PC-3 (cell line): ENCODE measurements at regions of chr7 and their contacts with region 1.

Region 1: GRCh38 chr7:139829025-139829774 is at the start of gene TBXAS1:
- DNase-seq: peak; percentile 65
- ATAC-seq: peak; percentile 89
- H3K4me3 ChIP-seq: no peak within 1 kb of the TSS
- H3K27ac ChIP-seq: peak within 1 kb of the TSS; percentile 65
- H3K4me1 ChIP-seq: peaks cover 22% of the 10 kb centered on the region
- H3K27me3 ChIP-seq: no peaks in the 10 kb centered on the region
- CTCF ChIP-seq: no peak
- total RNA-seq, gene TBXAS1: 21.8 and 27.5 TPM in 2 replicates

Region 2: DNA sequence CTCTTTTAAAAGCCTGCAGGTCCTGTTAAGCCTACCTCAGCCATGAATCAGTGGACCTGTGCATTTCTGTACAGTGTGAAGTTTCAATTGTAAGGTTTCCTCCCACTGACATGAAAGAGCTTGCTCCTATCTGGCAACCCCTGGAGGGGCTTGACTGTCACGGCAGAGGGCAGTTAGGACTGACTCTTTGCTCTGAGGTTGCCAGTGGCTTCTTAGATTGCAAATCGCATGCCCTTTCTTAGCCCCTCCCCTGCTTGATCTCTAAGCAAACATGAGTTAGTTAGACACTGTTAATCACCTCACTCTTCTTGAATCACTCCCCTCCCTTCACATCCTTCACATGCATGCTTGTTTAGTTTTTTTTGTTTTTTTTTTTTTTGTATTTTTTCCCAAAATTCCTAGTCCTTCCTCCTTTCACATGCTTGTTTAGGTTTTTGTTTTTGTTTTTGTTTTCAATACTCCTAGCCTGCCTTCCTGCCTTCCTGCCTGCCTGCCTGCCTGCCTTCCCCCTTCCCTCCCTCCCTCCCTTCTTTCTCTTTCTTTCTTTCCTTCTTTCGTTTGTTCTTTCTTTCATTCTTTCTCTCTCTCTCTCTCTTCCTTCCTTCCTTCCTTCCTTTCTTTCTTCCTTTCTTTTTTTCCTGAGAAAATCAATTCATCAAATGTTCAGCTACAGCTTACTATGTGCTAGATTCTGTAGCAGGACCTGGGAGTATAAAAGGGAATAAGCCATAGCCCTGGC is 45.4 kb before region 1 on chr7:
- CTCF ChIA-PET with region 1: no interaction called
- POLR2A ChIA-PET with region 1: interaction called, 3 read pairs
- intact Hi-C with region 1: loop called (anchors 5 kb)
- DNase-seq: peak; percentile 65
- ATAC-seq: peak; percentile 82
- H3K4me3 ChIP-seq: no peak overlapping the region
- H3K27ac ChIP-seq: peak overlapping the region; percentile 49
- H3K4me1 ChIP-seq: peaks cover 45% of the 10 kb centered on the region
- H3K27me3 ChIP-seq: no peaks in the 10 kb centered on the region
- CTCF ChIP-seq: no peak

Region 3: GRCh38 chr7:139842401-139843210 is 13.4 kb after region 1 on chr7:
- CTCF ChIA-PET with region 1: no interaction called
- POLR2A ChIA-PET with region 1: no interaction called
- intact Hi-C with region 1: no loop called
- DNase-seq: no peak
- ATAC-seq: no peak
- H3K4me3 ChIP-seq: no peak overlapping the region
- H3K27ac ChIP-seq: no peak overlapping the region
- H3K4me1 ChIP-seq: no peaks in the 10 kb centered on the region
- H3K27me3 ChIP-seq: no peaks in the 10 kb centered on the region
- CTCF ChIP-seq: no peak

Region 4: DNA sequence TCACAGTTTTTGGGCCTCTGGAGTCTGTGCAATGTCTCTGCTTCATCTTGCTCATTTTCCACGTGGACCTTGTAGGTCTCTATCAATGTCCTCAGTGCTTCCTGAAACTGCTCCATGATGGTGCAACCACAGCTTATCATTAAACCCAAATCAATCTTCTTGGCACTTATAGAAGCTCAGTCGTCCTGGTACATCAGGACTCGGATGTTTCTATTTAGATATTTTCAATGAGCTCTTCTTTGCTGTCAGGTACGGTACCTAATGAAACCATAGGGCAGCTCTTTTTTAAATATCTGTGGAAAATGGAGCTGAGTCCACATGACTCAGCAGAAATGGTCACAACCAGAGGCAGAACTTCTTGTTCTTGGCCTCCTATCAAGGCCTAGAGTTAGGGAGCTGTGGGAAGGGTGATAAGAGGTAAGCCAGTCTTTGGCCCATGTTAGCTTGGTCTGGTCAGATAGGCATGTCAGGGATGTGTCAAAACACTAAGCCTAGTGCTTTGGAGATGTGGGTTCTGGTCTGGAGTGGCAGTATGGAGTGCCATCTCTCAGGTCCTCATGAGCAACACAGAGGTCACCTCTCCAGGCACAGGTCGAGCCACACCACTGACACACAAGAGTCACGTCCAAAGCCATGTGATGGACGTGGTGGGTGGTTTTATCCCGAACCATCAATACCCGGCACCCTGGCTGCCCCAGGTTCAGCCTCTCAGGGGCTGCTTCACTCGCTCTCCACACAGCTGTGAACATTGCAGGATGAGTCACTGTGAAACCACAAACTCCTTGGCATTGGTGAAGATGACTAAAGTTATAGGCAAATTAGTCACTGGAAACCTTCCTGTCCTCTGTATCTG is 86.9 kb after region 1 on chr7:
- CTCF ChIA-PET with region 1: no interaction called
- POLR2A ChIA-PET with region 1: no interaction called
- intact Hi-C with region 1: loop called (anchors 2 kb)
- DNase-seq: peak; percentile 98
- ATAC-seq: peak; percentile 83
- H3K4me3 ChIP-seq: no peak overlapping the region
- H3K27ac ChIP-seq: peak overlapping the region; percentile 96
- H3K4me1 ChIP-seq: peaks cover 42% of the 10 kb centered on the region
- H3K27me3 ChIP-seq: no peaks in the 10 kb centered on the region
- CTCF ChIP-seq: no peak